ENCODE measurements at regions of chr7 and their contacts with region 1.

Region 1: GRCh38 chr7:12107841-12108249 is 103.2 kb upstream of the TMEM106B start:
- DNase-seq: peak in 1 of 2 experiments; percentile 89
- ATAC-seq: peak in 1 of 2 experiments; percentile 84; a peak in 4 of 6 replicates
- H3K4me3 ChIP-seq: peak overlapping the region; percentile 4; the same call in 1 of the 3 replicates
- H3K27ac ChIP-seq: peak overlapping the region; percentile 64 to 84
- H3K4me1 ChIP-seq: peaks cover 52% of the 10 kb centered on the region
- CTCF ChIP-seq: no peak
- EP300 ChIP-seq: peak; percentile 63 to 90
- POLR2A ChIP-seq: no peak
- RAD21 ChIP-seq: peak; percentile 25 to 33; a peak in 3 of 5 replicates

Region 2: GRCh38 chr7:12211054-12211710 is 103.3 kb after region 1 on chr7 and contains the start of gene TMEM106B:
- CTCF ChIA-PET with region 1: no interaction called
- POLR2A ChIA-PET with region 1: interaction called, 17 read pairs
- DNase-seq: peak; percentile 88 to 97
- ATAC-seq: peak; percentile 92 to 95
- H3K4me3 ChIP-seq: peak within 1 kb of the TSS; percentile 63
- H3K27ac ChIP-seq: peak within 1 kb of the TSS; percentile 95 to 96
- H3K4me1 ChIP-seq: peaks cover 36% of the 10 kb centered on the region
- CTCF ChIP-seq: peak; percentile 26; the same call in 1 of the 3 replicates
- EP300 ChIP-seq: no peak
- POLR2A ChIP-seq: peak; percentile 66
- RAD21 ChIP-seq: peak in 1 of 2 experiments; percentile 45; a peak in 3 of 5 replicates
- polyA plus RNA-seq, gene TMEM106B: 94.8 and 123 TPM in 2 replicates

Measured in A549 (cell line).